ENCODE measurements at regions of chr3 and their contacts with region 1.

Region 1: DNA sequence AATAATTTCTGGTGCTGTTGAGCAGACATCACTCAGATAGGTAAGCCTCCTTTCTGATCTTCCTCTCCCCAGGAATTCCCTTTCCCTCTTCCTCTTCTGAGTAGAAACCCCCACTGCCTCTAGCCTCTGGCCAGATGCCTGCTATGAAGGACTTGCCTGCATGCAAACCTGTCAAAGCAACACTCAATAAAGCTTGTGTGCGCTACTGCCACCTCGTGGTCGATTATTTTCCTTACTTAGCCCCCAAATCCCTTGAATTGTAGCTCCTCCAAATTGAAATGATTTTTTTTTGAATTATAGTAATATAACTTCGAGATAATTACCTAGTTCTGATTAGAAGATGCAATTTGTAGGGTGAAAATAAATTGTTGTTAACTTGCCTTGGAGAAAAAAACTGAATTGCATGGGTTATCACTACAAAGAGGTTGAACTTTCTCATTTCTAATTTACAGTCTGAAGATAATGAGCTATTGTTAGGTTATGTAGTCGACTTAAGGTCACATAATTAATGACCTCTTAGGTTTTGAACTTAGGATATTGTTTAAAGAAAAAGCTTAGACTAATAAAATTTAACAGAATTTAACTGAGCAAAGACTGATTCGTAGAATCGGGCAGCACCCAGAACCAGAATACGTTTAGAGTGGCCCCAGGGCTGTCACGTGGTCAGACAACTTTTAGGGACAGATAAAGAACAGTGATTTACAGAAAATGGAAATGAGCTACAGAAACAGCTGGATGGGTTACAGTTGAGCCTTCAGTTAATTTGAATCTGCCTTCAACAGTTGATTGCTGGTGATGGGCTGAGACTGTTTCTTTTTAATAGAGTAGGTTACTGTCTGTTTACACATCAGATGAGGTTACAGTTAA is 269.3 kb downstream of the ARPP21 start:
- DNase-seq: peak; percentile 20
- H3K4me3 ChIP-seq: no peak overlapping the region
- H3K27ac ChIP-seq: no peak overlapping the region
- H3K4me1 ChIP-seq: no peaks in the 10 kb centered on the region
- H3K27me3 ChIP-seq: no peaks in the 10 kb centered on the region
- CTCF ChIP-seq: peak; percentile 36 to 58 (median 47)
- POLR2A ChIP-seq: no peak

Region 2: DNA sequence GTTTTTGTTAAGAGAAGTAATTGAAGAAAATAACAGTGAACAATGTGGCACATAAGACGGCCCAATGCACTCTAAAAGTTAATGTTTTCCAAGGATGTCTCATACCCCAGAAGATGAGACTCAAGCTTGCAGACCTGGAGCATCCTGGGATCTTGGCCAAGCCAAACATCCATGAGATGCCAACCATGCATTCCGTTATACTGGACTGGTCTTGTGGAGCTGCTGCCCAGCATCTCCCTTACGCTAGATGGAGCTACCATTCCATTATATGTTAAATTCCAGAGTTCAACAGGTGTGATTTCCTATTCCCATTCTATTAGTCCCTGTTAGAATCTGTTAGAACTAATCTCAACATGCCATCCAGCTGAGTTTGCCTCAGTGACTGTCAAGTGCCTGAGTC is 1928.3 kb before region 1 on chr3:
- intact Hi-C with region 1: loop called (anchors 5 kb)
- DNase-seq: peak; percentile 39
- H3K4me3 ChIP-seq: no peak overlapping the region
- H3K27ac ChIP-seq: no peak overlapping the region
- H3K4me1 ChIP-seq: no peaks in the 10 kb centered on the region
- H3K27me3 ChIP-seq: peaks cover 3% of the 10 kb centered on the region
- CTCF ChIP-seq: peak in 3 of 4 experiments; percentile 20 to 50 (median 33)
- POLR2A ChIP-seq: no peak

Measured in prostate gland (tissue), 2 donors.